Left ventricle myocardium inferior (tissue), 1 donor: ENCODE measurements at regions of chr5 and their contacts with region 1.

Region 1: DNA sequence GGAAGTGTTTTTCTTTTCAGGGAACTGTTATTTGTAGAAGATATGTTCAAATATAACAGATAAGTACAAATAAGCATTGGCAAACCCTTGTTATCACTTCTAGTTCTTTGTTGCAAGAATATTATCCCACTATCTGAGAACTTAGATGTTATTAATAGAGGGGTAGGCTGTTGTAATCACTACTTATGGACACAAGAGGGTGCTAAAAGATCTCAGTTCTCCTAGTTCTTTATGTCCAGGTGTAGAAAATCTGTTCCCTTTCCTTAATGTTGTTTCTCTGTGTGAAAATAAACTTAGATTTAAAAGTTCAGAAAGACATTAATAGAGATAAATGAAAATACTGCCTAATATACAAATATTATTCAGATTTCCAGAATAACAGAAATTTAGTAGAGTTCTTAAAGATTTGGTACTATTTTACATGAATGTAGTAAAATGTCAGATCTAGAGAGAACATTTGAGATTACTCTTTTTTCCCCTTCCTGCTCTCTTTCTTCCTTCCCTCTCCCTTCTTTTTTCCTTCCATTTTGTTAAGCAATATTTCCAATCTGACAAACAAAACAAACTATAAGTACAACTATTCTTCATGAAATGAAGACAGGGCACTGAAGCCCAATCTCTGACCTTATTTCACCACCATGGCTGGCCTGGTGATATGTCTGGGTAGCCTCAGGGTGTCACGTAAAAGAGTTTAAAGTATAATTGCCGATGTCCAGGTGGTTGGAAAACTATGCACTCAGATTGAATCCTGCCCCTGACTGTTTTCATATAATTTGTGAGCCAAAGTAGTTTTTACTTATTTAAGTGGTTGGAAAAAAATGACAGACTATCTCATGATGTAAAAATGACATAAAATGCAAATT is 43.6 kb upstream of the C5orf46 start:
- DNase-seq: no peak
- H3K4me3 ChIP-seq: no peak overlapping the region
- H3K27ac ChIP-seq: no peak overlapping the region
- H3K4me1 ChIP-seq: no peaks in the 10 kb centered on the region
- H3K27me3 ChIP-seq: no peaks in the 10 kb centered on the region
- CTCF ChIP-seq: peak; percentile 78

Region 2: GRCh38 chr5:147892821-147893232 is 57.1 kb before region 1 on chr5:
- intact Hi-C with region 1: no loop called
- DNase-seq: no peak
- H3K4me3 ChIP-seq: no peak overlapping the region
- H3K27ac ChIP-seq: no peak overlapping the region
- H3K4me1 ChIP-seq: peaks cover 8% of the 10 kb centered on the region
- H3K27me3 ChIP-seq: no peaks in the 10 kb centered on the region
- CTCF ChIP-seq: no peak

Region 3: GRCh38 chr5:148107608-148108007 is 157.7 kb after region 1 on chr5:
- intact Hi-C with region 1: loop called (anchors 5 kb)
- DNase-seq: no peak
- H3K4me3 ChIP-seq: no peak overlapping the region
- H3K27ac ChIP-seq: no peak overlapping the region
- H3K4me1 ChIP-seq: no peaks in the 10 kb centered on the region
- H3K27me3 ChIP-seq: no peaks in the 10 kb centered on the region
- CTCF ChIP-seq: peak; percentile 44

Region 4: GRCh38 chr5:148120317-148120716 is 170.4 kb after region 1 on chr5:
- intact Hi-C with region 1: loop called (anchors 5 kb)
- DNase-seq: no peak
- H3K4me3 ChIP-seq: no peak overlapping the region
- H3K27ac ChIP-seq: no peak overlapping the region
- H3K4me1 ChIP-seq: no peaks in the 10 kb centered on the region
- H3K27me3 ChIP-seq: no peaks in the 10 kb centered on the region
- CTCF ChIP-seq: no peak